Activated CD4-positive, alpha-beta T cell treated with anti-CD3 and anti-CD28 coated beads for 36 hours (primary cell): ENCODE measurements at regions of chr19 and their contacts with region 1.

Region 1: DNA sequence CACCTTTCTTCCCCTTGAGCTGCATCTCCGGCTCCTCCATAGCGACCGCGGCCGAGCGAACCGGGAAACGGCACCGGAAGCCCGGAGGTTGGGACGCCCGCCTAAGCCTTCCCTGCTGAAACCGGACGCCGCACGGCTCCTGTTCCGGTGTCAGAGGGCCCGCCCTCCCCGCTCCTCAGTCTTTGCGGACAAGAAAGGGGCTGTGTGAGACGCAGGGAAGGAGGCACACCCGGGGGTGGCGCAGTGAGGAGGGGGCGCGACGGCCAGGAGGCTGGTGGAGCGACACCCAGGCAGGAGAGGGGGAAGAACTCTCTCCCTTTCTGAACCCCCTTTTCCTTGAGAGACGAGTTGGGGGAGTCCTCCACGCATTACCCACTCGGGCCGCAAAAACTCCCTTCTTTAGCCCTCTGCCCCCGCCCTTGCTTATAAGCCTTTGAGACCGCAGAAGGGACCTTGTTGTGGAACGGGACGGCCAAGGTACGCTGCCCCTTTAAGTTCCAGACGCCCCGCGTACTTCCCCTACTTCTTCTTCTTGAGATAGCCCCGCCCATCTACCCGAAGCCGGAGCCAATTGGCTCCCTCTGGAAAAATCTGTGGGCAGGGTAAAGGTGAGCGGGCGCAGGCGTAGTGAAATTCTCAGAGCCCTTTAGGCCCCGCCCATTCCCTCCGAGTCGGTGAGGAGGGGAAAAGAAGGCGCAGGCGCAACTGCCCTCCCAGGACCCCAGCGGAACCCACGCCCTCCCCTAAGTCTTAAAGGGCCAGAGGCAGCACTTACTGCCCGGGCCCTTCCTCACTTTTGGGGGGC is at the starts of genes BORCS8 and RFXANK:
- DNase-seq: peak; percentile 99
- ATAC-seq: peak; percentile 92
- H3K4me3 Mint-ChIP-seq: peak within 1 kb of the TSS; percentile 91
- H3K27ac Mint-ChIP-seq: peak within 1 kb of the TSS; percentile 94
- H3K4me1 Mint-ChIP-seq: peaks cover 41% of the 10 kb centered on the region
- H3K27me3 Mint-ChIP-seq: no peaks in the 10 kb centered on the region
- total RNA-seq, gene BORCS8: 19.5 to 25.3 TPM
- total RNA-seq, gene RFXANK: 56.2 to 68.5 TPM

Region 2: DNA sequence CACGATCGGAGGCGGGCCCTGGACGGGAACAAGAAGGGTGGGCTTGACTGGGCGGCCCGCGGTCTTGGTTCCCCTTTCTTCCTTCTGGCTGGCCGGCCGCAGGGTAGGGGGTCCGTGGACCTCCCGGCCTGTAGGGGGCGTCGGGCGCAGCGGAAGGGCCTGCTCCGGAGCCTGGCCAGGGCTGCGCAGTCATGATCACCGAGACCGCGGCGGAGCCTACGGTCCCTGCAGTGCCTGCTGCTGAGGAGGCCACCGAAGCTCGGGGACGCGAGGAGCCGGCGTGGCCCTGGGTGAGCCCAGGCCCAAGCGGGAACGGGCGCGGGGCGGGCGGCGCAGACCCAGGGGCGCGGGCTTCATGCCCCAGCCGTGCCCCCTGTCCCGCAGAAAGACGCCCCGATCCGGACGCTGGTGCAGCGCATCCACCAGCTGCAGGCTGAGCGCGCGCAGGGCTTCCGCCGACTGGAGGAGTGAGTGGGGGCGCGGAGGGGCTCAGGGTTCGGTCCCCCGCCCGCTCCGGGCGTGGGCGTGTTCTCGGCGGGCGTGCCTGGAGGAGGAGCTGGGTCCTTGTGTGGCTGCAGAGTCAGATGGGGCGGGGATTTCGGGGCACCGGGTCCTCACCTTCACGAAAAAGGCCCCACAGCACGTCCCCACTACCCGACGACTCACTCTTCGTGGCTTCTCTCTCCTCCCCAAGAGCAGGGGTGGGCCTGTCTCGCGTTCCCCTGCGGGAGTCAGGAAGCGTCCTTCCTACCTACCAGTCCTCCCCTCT is 603.5 kb before region 1 on chr19 and contains the start of gene REX1BD:
- CTCF ChIA-PET with region 1: no interaction called
- POLR2A ChIA-PET with region 1: no interaction called
- intact Hi-C with region 1: loop called in 1 of 2 experiments (anchors 5 kb)
- DNase-seq: peak; percentile 91
- ATAC-seq: peak; percentile 81
- H3K4me3 Mint-ChIP-seq: peak within 1 kb of the TSS; percentile 90
- H3K27ac Mint-ChIP-seq: peak within 1 kb of the TSS; percentile 92
- H3K4me1 Mint-ChIP-seq: peaks cover 31% of the 10 kb centered on the region
- H3K27me3 Mint-ChIP-seq: no peaks in the 10 kb centered on the region
- total RNA-seq, gene REX1BD: 47.8 to 81.3 TPM

Region 3: DNA sequence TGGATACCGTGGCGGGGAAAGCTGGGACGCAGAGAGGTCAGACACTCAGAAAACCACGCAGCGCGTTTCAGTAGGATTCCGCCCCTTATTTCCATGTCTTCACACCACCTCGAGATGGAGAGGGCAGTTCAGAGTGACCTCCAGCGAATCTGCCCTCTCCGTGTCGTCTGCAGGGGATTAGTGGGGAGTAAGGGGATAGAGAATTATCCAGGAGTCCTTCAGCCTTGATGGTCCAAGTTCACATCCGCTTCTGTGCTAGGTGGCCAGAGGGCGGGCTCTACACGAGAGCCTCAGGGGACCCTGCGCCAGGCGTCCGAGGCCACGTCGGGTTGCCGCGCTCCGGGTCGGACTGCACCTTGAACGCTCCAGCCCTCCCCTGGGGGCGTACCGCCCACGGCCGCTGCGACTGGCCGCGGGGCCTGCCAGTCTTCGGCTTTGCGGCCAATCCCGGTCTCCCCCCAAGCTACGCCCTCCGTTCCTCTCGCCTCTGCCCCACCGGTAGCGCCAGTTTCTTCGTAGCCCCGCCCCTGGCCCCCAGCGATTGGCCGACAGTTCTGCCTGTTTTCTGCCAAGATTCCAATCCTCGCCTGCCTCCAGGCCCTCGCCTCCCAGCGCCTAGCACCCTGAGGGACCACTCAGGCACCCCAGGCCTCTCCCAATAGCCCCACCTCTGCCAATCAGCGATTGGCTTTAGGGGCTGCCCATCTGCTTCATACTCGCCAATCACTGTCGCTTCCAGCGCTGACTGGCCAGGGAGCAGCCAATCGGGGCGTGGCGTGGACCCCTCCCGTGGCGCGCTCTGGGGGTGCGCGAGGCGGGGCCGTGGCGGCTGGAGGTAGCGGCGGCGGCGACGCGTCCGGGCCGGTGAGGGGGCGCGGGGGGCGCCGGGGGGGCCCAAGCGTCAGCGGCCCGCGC is 128.8 kb before region 1 on chr19 and contains the start of gene SLC25A42:
- CTCF ChIA-PET with region 1: no interaction called
- POLR2A ChIA-PET with region 1: no interaction called
- intact Hi-C with region 1: loop called in 1 of 2 experiments (anchors 1 kb)
- DNase-seq: peak; percentile 99
- ATAC-seq: peak; percentile 96
- H3K4me3 Mint-ChIP-seq: peak within 1 kb of the TSS; percentile 75
- H3K27ac Mint-ChIP-seq: peak within 1 kb of the TSS; percentile 85
- H3K4me1 Mint-ChIP-seq: peaks cover 34% of the 10 kb centered on the region
- H3K27me3 Mint-ChIP-seq: no peaks in the 10 kb centered on the region
- total RNA-seq, gene SLC25A42: 10.4 to 10.6 TPM

Region 4: GRCh38 chr19:19181488-19181998 is 10.7 kb before region 1 on chr19:
- CTCF ChIA-PET with region 1: no interaction called
- POLR2A ChIA-PET with region 1: no interaction called
- intact Hi-C with region 1: no loop called
- DNase-seq: no peak
- ATAC-seq: no peak
- H3K4me3 Mint-ChIP-seq: no peak overlapping the region
- H3K27ac Mint-ChIP-seq: no peak overlapping the region
- H3K4me1 Mint-ChIP-seq: peaks cover 6% of the 10 kb centered on the region
- H3K27me3 Mint-ChIP-seq: no peaks in the 10 kb centered on the region

Region 5: GRCh38 chr19:19224852-19225494 is 32.7 kb after region 1 on chr19:
- CTCF ChIA-PET with region 1: no interaction called
- POLR2A ChIA-PET with region 1: no interaction called
- intact Hi-C with region 1: loop called in 1 of 2 experiments (anchors 1 kb)
- DNase-seq: peak; percentile 87
- ATAC-seq: peak; percentile 90
- H3K4me3 Mint-ChIP-seq: peak overlapping the region; percentile 61
- H3K27ac Mint-ChIP-seq: no peak overlapping the region
- H3K4me1 Mint-ChIP-seq: no peaks in the 10 kb centered on the region
- H3K27me3 Mint-ChIP-seq: peaks cover 6% of the 10 kb centered on the region

Region 6: GRCh38 chr19:19276386-19276785 is 84.1 kb after region 1 on chr19:
- CTCF ChIA-PET with region 1: no interaction called
- POLR2A ChIA-PET with region 1: no interaction called
- intact Hi-C with region 1: no loop called
- DNase-seq: no peak
- ATAC-seq: no peak
- H3K4me3 Mint-ChIP-seq: no peak overlapping the region
- H3K27ac Mint-ChIP-seq: no peak overlapping the region
- H3K4me1 Mint-ChIP-seq: peaks cover 5% of the 10 kb centered on the region
- H3K27me3 Mint-ChIP-seq: peaks cover 12% of the 10 kb centered on the region

Region 7: GRCh38 chr19:19404879-19405860 is 212.9 kb after region 1 on chr19 and contains the start of gene GATAD2A:
- CTCF ChIA-PET with region 1: interaction called, 4 read pairs
- POLR2A ChIA-PET with region 1: interaction called, 3 read pairs
- intact Hi-C with region 1: loop called in 1 of 2 experiments (anchors 1 kb)
- DNase-seq: peak; percentile 96
- ATAC-seq: peak; percentile 74
- H3K4me3 Mint-ChIP-seq: peak within 1 kb of the TSS; percentile 91
- H3K27ac Mint-ChIP-seq: peak within 1 kb of the TSS; percentile 95
- H3K4me1 Mint-ChIP-seq: peaks cover 69% of the 10 kb centered on the region
- H3K27me3 Mint-ChIP-seq: no peaks in the 10 kb centered on the region
- total RNA-seq, gene GATAD2A: 123 to 139 TPM

Region 8: DNA sequence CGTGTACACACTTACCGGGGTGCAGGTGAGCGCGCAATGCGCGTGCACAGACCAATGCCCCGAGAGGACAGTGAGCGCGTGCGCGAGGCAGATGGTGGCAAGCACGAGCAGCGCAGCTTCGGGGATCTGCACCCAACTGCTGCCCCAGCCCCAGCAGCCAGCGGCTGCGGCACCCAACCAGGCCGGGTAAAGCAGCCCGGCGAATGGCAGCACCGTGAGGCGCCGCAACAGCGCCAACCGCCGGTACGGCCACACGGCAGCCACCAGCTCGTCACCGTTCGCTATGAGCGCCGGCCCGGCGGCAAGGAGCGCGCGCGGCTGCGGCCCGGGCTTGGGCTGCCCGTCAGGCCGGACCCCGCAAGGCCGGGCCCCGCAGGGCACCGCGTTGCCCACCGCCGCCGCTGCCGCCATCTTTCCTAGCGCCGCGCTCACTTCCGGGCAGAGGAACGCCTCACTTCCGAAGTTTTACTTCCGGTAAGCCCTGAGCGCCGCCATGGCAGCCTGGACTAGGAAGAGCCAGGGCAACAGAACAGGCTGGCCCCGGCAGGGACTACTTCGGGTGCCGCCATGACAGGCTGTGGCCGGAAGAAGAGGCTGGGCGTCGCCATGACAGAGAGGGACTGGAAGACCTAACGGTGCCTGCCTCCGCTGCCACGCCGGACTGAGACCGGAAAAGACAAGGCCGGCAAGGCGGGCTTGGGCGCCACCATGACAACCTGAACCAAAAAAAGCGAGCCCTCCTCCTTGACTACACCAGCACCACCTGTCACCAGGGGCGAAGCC is 471.2 kb after region 1 on chr19 and contains the start of gene ATP13A1:
- CTCF ChIA-PET with region 1: no interaction called
- POLR2A ChIA-PET with region 1: no interaction called
- intact Hi-C with region 1: loop called in 1 of 2 experiments (anchors 1 kb)
- DNase-seq: peak; percentile 95
- ATAC-seq: peak; percentile 77
- H3K4me3 Mint-ChIP-seq: peak within 1 kb of the TSS; percentile 78
- H3K27ac Mint-ChIP-seq: peak within 1 kb of the TSS; percentile 98
- H3K4me1 Mint-ChIP-seq: peaks cover 35% of the 10 kb centered on the region
- H3K27me3 Mint-ChIP-seq: no peaks in the 10 kb centered on the region
- total RNA-seq, gene ATP13A1: 61.8 to 71.2 TPM